ENCODE measurements at regions of chr2 and their contacts with region 1.

Region 1: DNA sequence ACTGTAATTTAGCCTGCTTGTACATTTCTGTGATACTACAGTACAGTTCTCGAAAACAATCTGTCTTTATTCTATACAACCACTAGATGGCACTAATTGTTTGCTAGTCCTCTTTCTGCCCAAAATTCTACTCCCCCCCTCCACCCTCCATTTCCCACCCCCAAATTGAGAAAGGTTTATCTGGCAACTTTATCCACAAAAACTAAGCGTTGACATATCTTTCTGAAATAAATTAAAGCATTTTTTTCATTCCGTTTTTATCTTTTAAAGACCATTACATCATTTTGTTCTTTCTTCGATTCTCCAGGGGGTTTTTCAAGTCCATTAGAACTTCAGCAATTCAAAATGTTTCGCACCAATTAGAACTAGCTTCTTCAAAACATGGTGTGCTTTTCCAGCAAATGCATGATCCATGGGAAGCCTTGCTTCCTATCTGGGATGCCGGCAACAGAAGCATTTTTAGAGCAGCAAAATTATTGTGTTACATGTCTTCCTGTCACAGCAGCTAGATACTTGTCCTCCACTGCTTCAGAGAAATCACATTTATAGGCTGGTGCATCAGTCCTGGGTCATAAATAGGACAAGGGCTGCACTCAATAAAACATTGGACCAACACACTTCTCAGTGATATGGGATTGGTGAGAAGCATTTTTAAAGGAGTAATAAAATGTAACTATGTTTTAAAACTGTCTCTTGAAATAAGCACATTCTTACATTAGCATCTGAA is 241.3 kb downstream of the PAX3 start:
- DNase-seq: no peak
- H3K4me3 ChIP-seq: no peak overlapping the region
- H3K4me3 Mint-ChIP-seq: no peak overlapping the region
- H3K27ac Mint-ChIP-seq: no peak overlapping the region
- H3K4me1 ChIP-seq: no peaks in the 10 kb centered on the region
- H3K4me1 Mint-ChIP-seq: no peaks in the 10 kb centered on the region
- H3K27me3 ChIP-seq: peaks cover 4% of the 10 kb centered on the region; the same call in 1 of the 2 replicates
- H3K27me3 Mint-ChIP-seq: peaks cover 28% of the 10 kb centered on the region
- CTCF ChIP-seq: peak; percentile 72 to 83

Region 2: DNA sequence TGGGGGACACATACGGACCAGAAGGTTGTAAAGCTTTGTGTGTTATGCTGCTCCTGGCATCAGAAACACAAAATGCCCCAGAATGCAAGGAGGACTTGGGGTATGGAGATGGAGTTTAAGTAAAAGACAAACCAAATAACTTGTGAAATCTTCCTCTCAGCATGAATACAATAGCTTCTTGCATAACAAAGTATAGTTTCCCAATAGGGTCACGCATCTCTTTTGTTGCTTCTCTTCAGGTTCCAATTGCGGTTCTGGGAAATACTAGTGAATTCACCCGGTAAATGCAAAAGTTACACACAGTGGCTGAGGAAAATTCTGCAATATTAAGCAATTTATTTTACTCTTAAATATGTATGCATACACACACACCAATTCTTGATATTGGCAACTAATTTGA is 146.2 kb before region 1 on chr2:
- CTCF ChIA-PET with region 1: no interaction called
- POLR2A ChIA-PET with region 1: no interaction called
- intact Hi-C with region 1: no loop called
- DNase-seq: no peak
- H3K4me3 ChIP-seq: no peak overlapping the region
- H3K4me3 Mint-ChIP-seq: no peak overlapping the region
- H3K27ac Mint-ChIP-seq: no peak overlapping the region
- H3K4me1 ChIP-seq: peaks cover 15% of the 10 kb centered on the region
- H3K4me1 Mint-ChIP-seq: peaks cover 22% of the 10 kb centered on the region
- H3K27me3 ChIP-seq: no peaks in the 10 kb centered on the region
- H3K27me3 Mint-ChIP-seq: no peaks in the 10 kb centered on the region
- CTCF ChIP-seq: no peak

Region 3: DNA sequence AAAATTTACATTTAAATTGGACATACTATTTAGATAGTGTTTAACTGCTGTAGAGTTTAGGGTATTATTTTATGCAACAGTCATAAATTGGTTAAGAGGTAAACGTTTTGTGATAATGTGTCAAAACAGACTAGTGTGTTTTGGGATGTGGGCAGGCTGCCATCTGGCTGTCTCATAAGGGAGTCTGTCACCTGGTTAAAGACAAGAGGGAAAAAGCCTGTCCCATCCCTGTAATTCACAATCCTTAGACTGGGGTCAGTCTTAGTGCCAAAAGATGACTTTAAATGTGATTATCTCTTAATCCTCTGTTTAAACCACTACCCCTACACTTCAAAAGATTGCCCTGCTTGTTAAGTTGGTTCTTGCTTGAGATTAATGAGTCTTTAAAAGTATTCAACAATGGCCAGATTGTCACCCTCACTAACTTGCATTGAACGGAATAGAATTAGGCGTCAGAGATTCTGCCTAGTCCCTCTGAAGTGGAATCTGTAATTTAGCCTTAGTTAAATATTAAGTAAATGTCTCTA is 426.1 kb after region 1 on chr2:
- CTCF ChIA-PET with region 1: no interaction called
- POLR2A ChIA-PET with region 1: no interaction called
- intact Hi-C with region 1: loop called (anchors 1 kb)
- DNase-seq: no peak
- H3K4me3 ChIP-seq: no peak overlapping the region
- H3K4me3 Mint-ChIP-seq: no peak overlapping the region
- H3K27ac Mint-ChIP-seq: no peak overlapping the region
- H3K4me1 ChIP-seq: no peaks in the 10 kb centered on the region
- H3K4me1 Mint-ChIP-seq: no peaks in the 10 kb centered on the region
- H3K27me3 ChIP-seq: peaks cover 1% of the 10 kb centered on the region
- H3K27me3 Mint-ChIP-seq: peaks cover 14% of the 10 kb centered on the region
- CTCF ChIP-seq: peak in 1 of 2 experiments; percentile 32

Measured in Caco-2 (cell line).